ENCODE measurements at regions of chr2 and their contacts with region 1.

Region 1: DNA sequence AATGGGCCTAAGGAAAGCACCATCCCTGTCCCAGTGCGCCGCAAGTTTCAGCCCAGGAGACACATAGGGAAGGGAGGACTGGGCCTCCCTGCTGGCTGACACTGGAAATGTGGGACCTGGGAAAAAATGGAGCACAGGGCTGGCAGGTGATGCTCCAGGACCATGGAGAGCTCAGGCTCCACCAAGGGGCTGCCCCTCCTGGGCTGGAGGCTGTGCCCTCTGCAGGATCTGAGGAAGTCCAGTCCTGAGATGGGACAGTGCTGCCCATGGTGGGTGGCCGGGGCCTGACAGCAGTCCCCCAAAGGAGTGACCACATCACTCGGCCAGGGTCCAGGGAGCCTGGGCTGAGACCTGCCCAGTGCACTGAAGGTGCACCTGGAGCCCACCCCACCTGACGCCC is 108.6 kb upstream of the TEKT4 start:
- DNase-seq: no peak
- H3K4me3 ChIP-seq: no peak overlapping the region
- H3K27ac ChIP-seq: no peak overlapping the region
- H3K4me1 ChIP-seq: no peaks in the 10 kb centered on the region
- H3K27me3 ChIP-seq: no peaks in the 10 kb centered on the region
- CTCF ChIP-seq: no peak
- POLR2A ChIP-seq: no peak

Region 2: DNA sequence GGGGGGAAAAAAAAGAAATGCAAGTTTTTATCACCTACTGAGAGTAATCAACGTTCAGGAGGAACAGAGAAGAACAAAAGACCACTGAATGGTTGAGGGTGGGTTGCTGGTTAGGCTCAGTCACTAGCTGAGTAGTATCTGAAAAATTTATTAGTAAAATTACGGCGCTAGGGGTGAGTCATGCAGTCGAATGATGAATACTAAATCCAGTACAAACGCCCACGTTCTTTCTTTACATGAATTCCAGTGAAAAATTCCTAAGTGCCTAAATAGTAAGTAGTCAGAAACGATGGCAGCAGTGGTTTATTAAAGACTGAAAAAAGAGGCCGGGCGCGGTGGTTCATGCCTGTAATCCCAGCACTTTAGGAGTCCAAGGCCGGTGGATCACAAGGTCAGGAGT is 160.6 kb after region 1 on chr2:
- intact Hi-C with region 1: loop called (anchors 5 kb)
- DNase-seq: no peak
- H3K4me3 ChIP-seq: no peak overlapping the region
- H3K27ac ChIP-seq: no peak overlapping the region
- H3K4me1 ChIP-seq: no peaks in the 10 kb centered on the region
- H3K27me3 ChIP-seq: no peaks in the 10 kb centered on the region
- CTCF ChIP-seq: no peak
- POLR2A ChIP-seq: no peak

Measured in breast epithelium (tissue), 4 donors.